ENCODE measurements at regions of chr11 and their contacts with region 1.

Region 1: GRCh38 chr11:61083601-61084147 is 18.6 kb upstream of the CD5 start:
- DNase-seq: peak; percentile 81
- H3K4me3 Mint-ChIP-seq: peak overlapping the region; percentile 82
- H3K27ac Mint-ChIP-seq: peak overlapping the region; percentile 96
- H3K4me1 Mint-ChIP-seq: peaks cover 61% of the 10 kb centered on the region
- H3K27me3 Mint-ChIP-seq: no peaks in the 10 kb centered on the region

Region 2: GRCh38 chr11:60924110-60924905 is 159.4 kb before region 1 on chr11 and contains the start of gene TMEM132A:
- CTCF ChIA-PET with region 1: no interaction called
- POLR2A ChIA-PET with region 1: no interaction called
- DNase-seq: no peak
- H3K4me3 Mint-ChIP-seq: peak within 1 kb of the TSS; percentile 24
- H3K27ac Mint-ChIP-seq: no peak within 1 kb of the TSS
- H3K4me1 Mint-ChIP-seq: peaks cover 16% of the 10 kb centered on the region
- H3K27me3 Mint-ChIP-seq: peaks cover 30% of the 10 kb centered on the region
- total RNA-seq, gene TMEM132A: 0.30 TPM in 1 of 2 experiments, not detected in the other

Region 3: DNA sequence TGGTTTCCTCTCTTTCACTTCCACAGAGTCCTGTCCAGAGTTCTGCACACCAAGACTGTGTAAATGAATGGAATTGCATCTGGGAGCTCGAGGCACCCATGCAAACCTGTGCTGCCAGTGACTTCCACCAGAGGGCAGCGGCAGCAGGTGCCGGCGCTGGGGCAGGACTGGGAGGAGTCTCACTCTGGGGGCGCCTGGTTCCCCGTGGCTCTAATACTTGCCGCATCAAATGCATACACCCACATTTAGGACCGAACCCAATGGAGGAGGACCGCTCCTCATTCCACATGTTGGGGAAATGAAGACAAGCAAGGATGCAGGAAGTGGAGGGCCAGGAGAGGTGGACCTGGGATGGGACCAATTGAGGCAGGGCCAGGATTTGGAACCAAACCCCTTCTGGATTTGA is 113.3 kb before region 1 on chr11:
- CTCF ChIA-PET with region 1: interaction called, 12 read pairs
- POLR2A ChIA-PET with region 1: interaction called, 5 read pairs
- DNase-seq: peak; percentile 85
- H3K4me3 Mint-ChIP-seq: peak overlapping the region; percentile 88
- H3K27ac Mint-ChIP-seq: peak overlapping the region; percentile 50
- H3K4me1 Mint-ChIP-seq: peaks cover 26% of the 10 kb centered on the region
- H3K27me3 Mint-ChIP-seq: peaks cover 12% of the 10 kb centered on the region

Region 4: DNA sequence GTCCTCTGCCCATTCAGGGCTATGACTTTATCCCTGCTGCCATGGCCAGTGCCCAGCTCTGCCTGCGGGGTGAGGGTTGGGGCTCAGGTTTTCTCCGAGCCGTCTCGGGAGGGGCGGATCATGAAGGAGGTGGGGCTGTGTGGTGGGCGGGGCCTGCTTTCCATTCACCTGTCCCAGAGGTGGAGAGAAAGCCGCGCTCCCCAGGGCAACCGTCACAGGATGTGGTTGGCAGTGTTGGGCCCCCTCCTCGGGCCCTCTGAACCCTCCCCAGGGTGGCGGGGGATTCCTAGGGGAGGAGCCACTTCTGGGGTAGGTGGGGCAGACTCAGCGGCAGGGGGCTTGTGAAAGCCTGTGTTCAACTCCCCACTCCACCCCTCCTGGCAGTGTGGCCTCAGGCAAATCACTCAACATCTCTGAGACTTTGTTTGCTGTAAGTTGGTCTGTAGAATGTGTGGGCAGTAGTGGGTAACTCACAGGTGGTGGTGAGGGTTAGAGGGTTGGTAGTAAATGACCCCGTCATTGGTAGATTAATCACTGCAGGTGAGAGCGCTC is 61.9 kb before region 1 on chr11:
- CTCF ChIA-PET with region 1: interaction called, 8 read pairs
- POLR2A ChIA-PET with region 1: interaction called, 58 read pairs
- DNase-seq: peak; percentile 83
- H3K4me3 Mint-ChIP-seq: peak overlapping the region; percentile 59
- H3K27ac Mint-ChIP-seq: peak overlapping the region; percentile 91
- H3K4me1 Mint-ChIP-seq: peaks cover 74% of the 10 kb centered on the region
- H3K27me3 Mint-ChIP-seq: no peaks in the 10 kb centered on the region

Region 5: GRCh38 chr11:61061081-61061826 is 22.4 kb before region 1 on chr11:
- CTCF ChIA-PET with region 1: interaction called, 14 read pairs
- POLR2A ChIA-PET with region 1: interaction called, 228 read pairs
- DNase-seq: peak; percentile 87
- H3K4me3 Mint-ChIP-seq: peak overlapping the region; percentile 65
- H3K27ac Mint-ChIP-seq: peak overlapping the region; percentile 96
- H3K4me1 Mint-ChIP-seq: peaks cover 87% of the 10 kb centered on the region
- H3K27me3 Mint-ChIP-seq: no peaks in the 10 kb centered on the region

Region 6: GRCh38 chr11:61102667-61103571 is 19.2 kb after region 1 on chr11:
- CTCF ChIA-PET with region 1: interaction called, 16 read pairs
- POLR2A ChIA-PET with region 1: interaction called, 63 read pairs
- DNase-seq: peak; percentile 46
- H3K4me3 Mint-ChIP-seq: no peak overlapping the region
- H3K27ac Mint-ChIP-seq: no peak overlapping the region
- H3K4me1 Mint-ChIP-seq: peaks cover 43% of the 10 kb centered on the region
- H3K27me3 Mint-ChIP-seq: no peaks in the 10 kb centered on the region

Region 7: GRCh38 chr11:61129639-61130523 is 46.2 kb after region 1 on chr11:
- CTCF ChIA-PET with region 1: interaction called, 10 read pairs
- POLR2A ChIA-PET with region 1: interaction called, 21 read pairs
- DNase-seq: peak; percentile 92
- H3K4me3 Mint-ChIP-seq: peak overlapping the region; percentile 0
- H3K27ac Mint-ChIP-seq: peak overlapping the region; percentile 42
- H3K4me1 Mint-ChIP-seq: peaks cover 20% of the 10 kb centered on the region
- H3K27me3 Mint-ChIP-seq: no peaks in the 10 kb centered on the region

Region 8: DNA sequence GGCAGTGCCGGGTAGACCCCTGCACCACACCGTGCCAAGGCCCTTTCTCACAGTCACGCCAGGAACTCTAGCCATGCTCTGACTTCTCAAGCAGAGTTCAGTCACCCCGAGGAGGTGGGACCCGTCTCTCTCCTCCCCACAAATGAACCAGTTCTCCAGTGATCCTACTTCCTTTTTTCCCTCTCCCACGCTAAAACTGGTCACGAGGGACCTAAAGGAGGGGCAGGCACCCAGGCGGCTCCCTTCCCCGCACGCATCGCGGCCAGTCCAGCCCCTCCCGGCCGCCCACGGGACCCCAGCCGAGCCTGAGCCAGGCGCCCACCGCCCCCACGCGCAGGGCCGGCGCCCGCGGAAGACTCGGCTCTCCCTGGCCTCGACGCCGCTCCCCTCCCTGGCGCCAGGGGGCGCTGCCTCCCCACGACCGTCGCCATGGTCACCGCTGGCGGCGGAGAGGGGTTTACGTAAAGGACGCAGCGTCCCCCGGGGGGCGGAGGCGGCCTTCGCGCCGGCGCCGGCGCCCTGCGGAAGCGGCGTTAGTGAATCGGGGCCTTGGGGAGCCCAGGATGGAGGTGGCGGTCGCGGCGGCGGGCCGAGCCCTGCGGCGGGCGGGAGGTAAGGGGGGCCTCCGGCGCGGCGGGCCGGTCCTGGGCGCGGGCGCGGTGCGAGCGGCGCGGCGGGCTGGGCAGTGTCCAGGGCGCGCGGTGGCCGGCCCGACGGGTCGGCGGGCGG is 596.4 kb after region 1 on chr11 and contains the start of gene DAGLA:
- CTCF ChIA-PET with region 1: no interaction called
- POLR2A ChIA-PET with region 1: no interaction called
- DNase-seq: peak; percentile 75
- H3K4me3 Mint-ChIP-seq: peak within 1 kb of the TSS; percentile 26
- H3K27ac Mint-ChIP-seq: no peak within 1 kb of the TSS
- H3K4me1 Mint-ChIP-seq: peaks cover 4% of the 10 kb centered on the region
- H3K27me3 Mint-ChIP-seq: peaks cover 28% of the 10 kb centered on the region
- total RNA-seq, gene DAGLA: 0.10 to 0.13 TPM